ENCODE measurements at regions of chr21 and their contacts with region 1.

Region 1: GRCh38 chr21:38505654-38506515 is 7.6 kb upstream of the ERG start:
- DNase-seq: no peak
- ATAC-seq: peak; percentile 86
- H3K4me3 ChIP-seq: peak overlapping the region; percentile 58 to 65
- H3K27ac ChIP-seq: peak overlapping the region in 1 of 2 donors; percentile 69
- H3K4me1 ChIP-seq: peaks cover 0 to 7% of the 10 kb centered on the region in 2 donors
- H3K27me3 ChIP-seq: no peaks in the 10 kb centered on the region

Region 2: DNA sequence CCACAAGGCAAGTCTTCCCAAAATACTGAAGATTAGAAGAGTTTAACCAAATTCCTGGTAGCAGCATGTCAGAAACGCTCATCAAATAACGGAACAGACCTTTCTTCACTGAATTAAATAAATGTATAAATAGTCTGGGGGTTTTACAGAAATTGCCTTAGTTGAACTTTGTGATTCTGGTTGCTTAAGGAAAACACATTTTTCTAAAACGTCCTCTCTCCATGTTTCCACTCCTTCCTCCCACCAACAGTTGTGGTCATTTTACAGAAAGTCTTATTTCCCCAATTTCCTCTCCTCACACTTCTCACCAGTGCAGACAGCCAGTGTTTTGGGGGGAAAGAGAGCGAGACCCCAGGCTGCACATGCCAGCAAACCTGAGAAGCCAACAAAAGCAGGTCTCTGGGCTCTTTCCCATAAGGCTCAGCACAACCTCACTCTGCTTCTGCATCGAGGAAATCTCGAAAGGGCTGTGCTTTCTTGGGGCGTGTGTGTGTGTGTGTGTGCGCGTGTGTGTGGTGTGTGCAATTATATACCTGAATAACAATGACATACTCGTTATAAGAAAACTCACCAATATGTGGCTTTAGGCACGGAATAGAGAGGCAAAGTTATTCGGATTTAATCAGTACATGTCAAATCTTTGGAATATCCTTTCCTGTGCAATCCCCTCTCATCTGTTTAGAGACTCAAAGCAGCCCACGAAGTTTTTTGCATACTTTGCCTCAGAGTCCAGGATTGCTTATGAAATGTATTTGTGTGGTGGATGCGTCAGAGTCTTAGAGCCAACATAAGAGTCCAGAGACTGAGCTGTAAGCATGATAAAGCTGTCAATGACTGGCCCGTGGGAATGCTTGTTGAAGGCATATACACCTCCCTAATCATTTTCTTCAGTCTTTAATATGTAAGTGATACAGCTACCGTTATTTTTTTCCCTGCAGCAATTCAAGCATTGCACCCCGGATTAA is 247.1 kb before region 1 on chr21:
- intact Hi-C with region 1: no loop called
- DNase-seq: no peak
- ATAC-seq: no peak
- H3K4me3 ChIP-seq: no peak overlapping the region
- H3K27ac ChIP-seq: no peak overlapping the region
- H3K4me1 ChIP-seq: no peaks in the 10 kb centered on the region
- H3K27me3 ChIP-seq: no peaks in the 10 kb centered on the region

Region 3: DNA sequence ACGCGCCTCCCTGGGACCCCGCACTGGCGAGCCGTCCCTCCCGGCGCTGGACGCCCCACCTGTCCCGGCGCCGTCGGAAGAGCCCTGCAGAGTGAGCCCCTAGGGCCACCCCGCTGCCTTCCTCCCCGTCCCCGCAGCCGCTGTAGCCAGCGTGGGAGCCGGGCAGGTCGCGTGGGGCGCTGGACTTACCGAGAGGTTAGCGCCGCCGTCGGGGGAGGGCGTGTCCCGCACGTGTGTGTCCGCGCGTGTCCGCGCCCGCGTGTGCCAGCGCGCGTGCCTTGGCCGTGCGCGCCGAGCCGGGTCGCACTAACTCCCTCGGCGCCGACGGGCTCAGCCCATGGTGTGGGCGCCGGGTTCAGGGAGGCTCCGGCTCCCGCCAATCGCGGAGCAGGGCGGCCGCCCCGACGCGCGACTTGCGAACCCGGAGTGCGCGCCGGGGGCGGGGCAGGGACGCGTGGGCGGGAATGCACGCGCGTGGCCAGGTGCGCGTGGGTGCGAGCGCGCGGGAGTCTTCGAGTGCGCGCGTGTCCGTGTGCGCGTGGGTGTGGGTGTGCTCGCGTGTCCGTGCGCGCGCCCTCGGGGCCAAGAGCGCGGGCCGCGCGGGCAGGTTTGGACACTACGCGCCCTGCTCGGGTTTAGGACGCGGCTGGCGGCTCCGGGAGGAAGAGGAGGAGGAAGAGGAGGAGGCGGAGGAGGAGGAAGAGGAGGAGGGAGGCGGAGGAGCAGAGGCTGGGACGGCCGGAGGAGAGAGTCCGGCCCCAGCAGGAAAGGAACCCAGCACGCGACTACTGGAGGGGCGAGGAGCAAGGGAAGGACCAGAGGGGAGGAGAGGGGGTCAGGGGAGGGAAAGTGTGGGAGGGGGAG is 154.7 kb after region 1 on chr21:
- intact Hi-C with region 1: loop called (anchors 1 to 5 kb)
- DNase-seq: peak; percentile 75 to 89
- ATAC-seq: peak; percentile 81
- H3K4me3 ChIP-seq: peak overlapping the region; percentile 43 to 60
- H3K27ac ChIP-seq: peak overlapping the region; percentile 10 to 86
- H3K4me1 ChIP-seq: peaks cover 0 to 4% of the 10 kb centered on the region in 2 donors
- H3K27me3 ChIP-seq: no peaks in the 10 kb centered on the region

Region 4: DNA sequence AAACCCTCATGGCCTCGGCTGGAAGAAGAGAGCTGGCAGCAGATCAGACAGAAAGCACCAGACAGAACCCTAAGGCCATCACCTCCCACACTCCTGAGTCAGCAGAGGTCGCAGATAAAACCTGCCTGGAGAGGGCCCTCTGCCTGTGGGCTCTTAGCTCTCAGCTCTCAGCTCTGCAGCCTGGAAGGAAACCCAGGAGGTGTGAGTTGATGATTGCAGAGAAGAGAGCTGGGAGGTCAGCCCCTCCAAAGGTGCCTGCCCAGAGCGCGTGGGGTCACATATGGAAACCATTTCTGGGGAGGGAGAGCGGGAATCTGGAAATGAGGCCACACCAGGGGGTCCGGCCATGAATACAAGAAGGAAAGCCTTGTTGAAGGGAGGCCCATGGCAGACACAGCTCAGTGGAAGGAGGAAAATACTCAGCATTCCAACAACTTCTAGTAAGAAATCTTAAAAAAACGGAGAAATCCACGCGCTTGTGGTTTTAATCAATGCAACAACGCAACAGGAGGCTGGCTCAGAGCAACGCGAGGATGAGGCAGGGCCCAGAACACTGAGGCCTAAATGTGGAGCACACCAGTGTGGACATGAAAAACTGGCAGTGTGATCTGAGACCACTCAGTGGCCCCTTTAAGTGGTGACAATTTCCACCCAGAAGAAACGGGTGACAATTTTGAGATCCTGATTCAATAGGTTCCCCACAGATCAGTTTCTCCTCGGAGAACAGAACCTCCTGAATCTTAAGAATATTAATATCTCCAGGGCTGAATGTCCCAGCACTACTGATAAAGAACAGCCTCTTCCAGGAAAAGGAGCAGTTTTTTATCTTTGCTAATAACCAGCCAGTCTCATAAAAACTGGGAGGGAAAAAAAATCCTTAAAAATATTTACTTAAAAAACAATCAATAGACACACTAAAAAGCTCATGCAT is 631.6 kb after region 1 on chr21:
- intact Hi-C with region 1: loop called (anchors 10 kb)
- DNase-seq: no peak
- ATAC-seq: peak; percentile 41
- H3K4me3 ChIP-seq: no peak overlapping the region
- H3K27ac ChIP-seq: no peak overlapping the region
- H3K4me1 ChIP-seq: no peaks in the 10 kb centered on the region
- H3K27me3 ChIP-seq: no peaks in the 10 kb centered on the region